AG04449 (cell line): ENCODE measurements at regions of chr3 and their contacts with region 1.

Region 1: GRCh38 chr3:141972399-141972798 is 96.0 kb downstream of the ATP1B3 start:
- DNase-seq: no peak
- H3K4me3 ChIP-seq: no peak overlapping the region
- CTCF ChIP-seq: no peak

Region 2: DNA sequence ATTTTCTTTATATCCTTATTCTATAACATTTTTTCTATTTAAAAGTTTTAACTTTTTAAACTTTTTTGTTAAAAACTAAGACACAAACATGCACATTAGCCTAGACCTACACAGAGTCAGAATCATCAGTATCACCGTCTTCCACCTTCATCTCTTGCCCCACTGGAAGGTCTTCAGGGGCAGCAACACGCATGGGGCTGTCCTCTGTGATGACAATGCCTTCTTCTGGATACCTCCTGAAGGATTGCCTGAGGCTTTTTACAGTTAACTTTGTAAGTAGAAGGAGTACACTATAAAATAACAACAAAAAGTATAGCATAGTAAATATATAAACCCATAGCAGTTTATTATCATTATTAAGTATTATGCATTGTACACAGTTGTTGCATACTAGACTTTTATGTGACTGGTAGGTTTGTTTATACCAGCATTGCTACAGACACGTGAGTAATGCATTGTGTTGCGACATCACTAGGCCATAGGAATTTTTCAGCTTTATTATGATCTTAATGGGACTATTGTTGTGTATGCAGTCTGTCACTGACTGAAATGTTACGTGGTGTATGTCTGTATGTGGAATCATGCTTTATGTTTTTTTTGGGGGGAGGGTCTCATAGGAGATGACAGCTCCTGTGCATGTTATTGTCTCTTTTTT is 77.7 kb before region 1 on chr3:
- CTCF ChIA-PET with region 1: no interaction called
- POLR2A ChIA-PET with region 1: no interaction called
- DNase-seq: peak; percentile 37
- H3K4me3 ChIP-seq: no peak overlapping the region
- CTCF ChIP-seq: no peak

Region 3: DNA sequence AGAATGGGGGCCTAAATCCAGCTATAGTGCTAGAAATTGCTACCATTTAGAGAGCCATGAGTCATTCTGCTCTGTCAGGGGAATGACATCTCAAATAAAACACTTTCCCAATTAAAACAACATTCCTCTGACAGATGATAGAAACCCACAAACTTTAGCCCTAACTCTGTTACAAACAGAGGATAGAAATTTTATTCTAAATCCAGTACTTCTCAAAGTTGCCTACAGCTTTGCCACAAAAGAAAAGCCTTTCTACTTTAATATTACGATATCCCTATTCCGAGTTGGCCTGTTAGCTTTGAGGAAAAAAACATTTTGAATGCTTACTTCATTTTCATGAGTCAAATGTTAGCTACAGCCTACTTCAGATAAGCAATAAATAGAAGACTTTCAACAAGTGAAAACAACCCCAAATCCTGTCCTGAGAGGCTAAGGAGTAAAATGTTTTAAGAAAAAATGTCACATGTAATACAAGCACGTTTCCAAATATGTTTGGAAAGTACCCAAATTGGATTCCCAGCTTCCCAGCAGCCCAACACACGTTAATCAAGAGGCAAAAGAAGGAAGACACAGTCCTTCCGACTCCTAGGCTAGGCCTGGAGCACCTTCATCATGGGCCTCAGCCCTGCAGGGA is 12.4 kb before region 1 on chr3:
- CTCF ChIA-PET with region 1: interaction called, 15 read pairs
- POLR2A ChIA-PET with region 1: no interaction called
- DNase-seq: no peak
- H3K4me3 ChIP-seq: no peak overlapping the region
- CTCF ChIP-seq: no peak

Region 4: GRCh38 chr3:142029052-142029642 is 56.7 kb after region 1 on chr3:
- CTCF ChIA-PET with region 1: no interaction called
- POLR2A ChIA-PET with region 1: no interaction called
- DNase-seq: no peak
- H3K4me3 ChIP-seq: no peak overlapping the region
- CTCF ChIP-seq: no peak